ENCODE measurements at regions of chr7 and their contacts with region 1.

Region 1: DNA sequence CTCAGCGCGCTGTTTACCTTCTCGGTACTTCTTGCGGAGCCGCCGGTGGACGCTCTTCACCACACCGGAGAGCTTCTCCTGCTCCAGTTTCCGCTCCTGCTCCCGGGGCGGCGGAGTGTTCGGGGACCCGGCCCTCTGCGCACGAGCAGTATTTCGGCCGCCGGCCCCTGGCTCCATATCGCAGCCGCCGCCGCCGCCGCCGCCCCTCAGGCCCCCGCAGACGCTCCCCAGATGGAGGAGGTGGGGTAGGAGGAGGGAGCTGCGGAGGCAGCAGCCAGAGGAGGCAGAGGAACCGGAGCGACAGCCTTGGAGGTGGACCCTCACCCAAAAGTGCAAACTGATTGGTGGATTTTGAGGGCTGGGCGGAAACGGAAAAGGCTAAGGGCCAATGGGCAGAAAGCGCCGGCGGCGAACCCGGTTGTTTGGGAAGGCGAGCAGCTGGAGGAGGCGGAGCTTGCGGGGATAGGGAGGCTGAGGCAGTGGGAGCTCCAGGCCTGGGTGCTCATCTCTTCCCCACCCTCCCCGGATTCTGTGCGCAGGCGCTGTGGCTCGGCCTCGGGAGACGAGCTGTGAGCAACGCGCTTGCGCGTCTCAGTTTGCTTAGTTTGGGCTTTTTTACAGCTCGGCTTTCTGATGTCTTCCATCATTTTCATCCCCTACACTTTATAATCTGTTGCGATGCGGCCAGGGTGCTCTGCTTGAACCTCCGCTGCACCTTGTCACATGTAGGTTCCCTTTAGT is 146.9 kb downstream of the GPR85 start:
- DNase-seq: peak; percentile 99 to 100
- H3K4me3 ChIP-seq: peak overlapping the region; percentile 76 to 95
- H3K27ac ChIP-seq: peak overlapping the region; percentile 81
- H3K4me1 ChIP-seq: peaks cover 44% of the 10 kb centered on the region
- H3K27me3 ChIP-seq: no peaks in the 10 kb centered on the region
- CTCF ChIP-seq: no peak
- POLR2A ChIP-seq: no peak

Region 2: GRCh38 chr7:113118074-113118959 is 178.6 kb after region 1 on chr7 and contains the start of gene SMIM30:
- intact Hi-C with region 1: loop called (anchors 10 kb)
- DNase-seq: peak in 1 of 2 donors; percentile 94
- H3K4me3 ChIP-seq: peak within 1 kb of the TSS; percentile 49 to 58
- H3K27ac ChIP-seq: peak within 1 kb of the TSS; percentile 63
- H3K4me1 ChIP-seq: peaks cover 13% of the 10 kb centered on the region
- H3K27me3 ChIP-seq: no peaks in the 10 kb centered on the region
- CTCF ChIP-seq: no peak
- POLR2A ChIP-seq: peak in 1 of 2 donors; percentile 87
- total RNA-seq, gene SMIM30: 15.7 TPM

Region 3: DNA sequence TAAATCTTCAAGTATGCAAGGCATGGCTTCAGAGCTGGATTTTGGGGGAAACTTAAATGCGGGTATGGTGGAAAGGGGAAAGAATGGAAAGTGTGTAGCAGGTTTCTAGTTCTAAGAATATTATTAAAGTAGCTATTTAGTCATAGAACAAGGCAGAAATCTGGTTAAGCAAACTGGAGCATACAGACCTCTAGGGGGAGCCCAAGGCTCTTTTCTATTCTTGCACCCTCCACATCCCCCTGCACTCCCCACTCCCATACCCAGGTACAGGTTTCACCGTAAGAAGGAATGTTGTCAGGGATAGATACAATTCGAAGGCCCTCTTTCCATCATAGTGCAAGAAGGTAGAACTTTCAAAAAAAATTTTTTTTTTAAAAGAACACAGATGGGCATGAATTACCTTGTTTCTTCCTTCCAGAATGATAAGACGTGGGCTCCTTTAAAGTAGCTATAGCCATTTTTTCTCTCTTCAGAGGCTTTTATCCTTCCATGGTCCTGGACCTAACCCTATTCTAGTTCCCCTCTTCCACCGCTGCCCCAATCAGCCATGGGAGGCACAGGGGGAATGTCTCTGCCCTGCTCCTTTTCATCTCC is 220.1 kb after region 1 on chr7:
- intact Hi-C with region 1: no loop called
- DNase-seq: no peak
- H3K4me3 ChIP-seq: no peak overlapping the region
- H3K27ac ChIP-seq: no peak overlapping the region
- H3K4me1 ChIP-seq: no peaks in the 10 kb centered on the region
- H3K27me3 ChIP-seq: no peaks in the 10 kb centered on the region
- CTCF ChIP-seq: no peak
- POLR2A ChIP-seq: no peak